ENCODE measurements at regions of chr1 and their contacts with region 1.

Region 1: DNA sequence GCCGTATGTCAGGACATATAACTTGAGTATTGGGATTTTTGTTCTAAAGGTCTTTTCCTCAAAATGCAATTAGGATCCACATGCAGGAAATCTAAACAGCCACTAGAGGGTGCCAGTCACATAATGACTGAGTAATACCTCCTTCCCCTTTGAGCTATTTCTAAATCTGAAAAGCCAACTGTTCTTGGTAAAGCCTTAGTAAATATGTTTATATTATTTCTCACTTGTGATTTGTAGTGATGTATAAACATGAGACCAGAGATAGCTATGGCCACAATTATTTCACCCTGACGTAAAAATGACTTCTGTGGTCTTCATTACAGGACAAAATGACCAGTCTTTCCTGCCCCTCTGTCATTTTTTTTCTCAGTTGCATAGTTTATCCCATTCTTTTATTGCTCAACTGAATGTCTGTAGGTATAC is 41.0 kb upstream of the DR1 start:
- DNase-seq: peak; percentile 48
- H3K4me3 ChIP-seq: no peak overlapping the region
- H3K27ac ChIP-seq: no peak overlapping the region
- H3K27me3 ChIP-seq: no peaks in the 10 kb centered on the region
- CTCF ChIP-seq: peak; percentile 90

Region 2: DNA sequence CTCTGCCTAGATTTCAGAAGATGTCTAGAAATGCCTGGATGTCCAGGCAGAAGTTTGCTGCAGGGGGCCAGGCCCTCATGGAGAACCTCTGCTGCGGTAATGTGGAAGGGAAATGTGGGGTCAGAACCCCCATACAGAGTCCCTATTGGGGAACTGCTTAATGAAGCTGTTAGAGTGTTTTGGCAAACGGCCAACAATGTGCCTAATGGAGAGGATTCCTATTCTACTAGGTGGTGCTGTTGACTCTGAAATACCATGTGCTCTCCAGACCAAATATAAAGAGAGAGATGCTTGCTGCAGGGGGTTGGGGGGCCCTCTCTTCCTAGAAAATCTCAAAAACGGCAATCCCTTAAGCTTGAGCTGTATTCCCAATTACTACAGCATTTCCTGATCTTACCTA is 16.2 kb before region 1 on chr1:
- CTCF ChIA-PET with region 1: interaction called, 13 read pairs
- POLR2A ChIA-PET with region 1: no interaction called
- DNase-seq: no peak
- H3K4me3 ChIP-seq: no peak overlapping the region
- H3K27ac ChIP-seq: no peak overlapping the region
- H3K27me3 ChIP-seq: no peaks in the 10 kb centered on the region
- CTCF ChIP-seq: no peak

Region 3: GRCh38 chr1:93338421-93338820 is 33.7 kb after region 1 on chr1:
- CTCF ChIA-PET with region 1: interaction called, 48 read pairs
- POLR2A ChIA-PET with region 1: no interaction called
- DNase-seq: peak; percentile 77
- H3K4me3 ChIP-seq: no peak overlapping the region
- H3K27ac ChIP-seq: peak overlapping the region; percentile 63
- H3K27me3 ChIP-seq: no peaks in the 10 kb centered on the region
- CTCF ChIP-seq: no peak

Region 4: DNA sequence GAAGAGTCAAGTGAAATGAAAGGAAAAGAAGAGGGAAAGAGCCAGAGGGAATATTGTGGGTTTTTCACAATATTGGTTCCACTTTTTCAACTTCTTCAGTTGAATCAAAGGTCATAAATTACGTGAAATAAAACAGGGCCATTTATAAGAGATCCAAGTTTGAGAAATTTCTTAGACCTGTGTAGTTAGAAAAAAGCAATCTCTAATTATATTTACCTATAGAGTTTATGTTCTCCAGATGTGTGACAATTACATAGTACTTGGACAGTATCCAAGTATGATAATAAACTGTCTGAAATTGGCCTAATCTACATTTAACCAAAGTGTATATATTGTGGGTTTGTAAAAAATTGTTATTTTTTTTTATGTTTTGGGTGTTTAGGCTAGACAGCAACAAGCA is 55.4 kb after region 1 on chr1:
- CTCF ChIA-PET with region 1: interaction called, 10 read pairs
- POLR2A ChIA-PET with region 1: no interaction called
- DNase-seq: no peak
- H3K4me3 ChIP-seq: no peak overlapping the region
- H3K27ac ChIP-seq: no peak overlapping the region
- H3K27me3 ChIP-seq: no peaks in the 10 kb centered on the region
- CTCF ChIP-seq: no peak

Region 5: DNA sequence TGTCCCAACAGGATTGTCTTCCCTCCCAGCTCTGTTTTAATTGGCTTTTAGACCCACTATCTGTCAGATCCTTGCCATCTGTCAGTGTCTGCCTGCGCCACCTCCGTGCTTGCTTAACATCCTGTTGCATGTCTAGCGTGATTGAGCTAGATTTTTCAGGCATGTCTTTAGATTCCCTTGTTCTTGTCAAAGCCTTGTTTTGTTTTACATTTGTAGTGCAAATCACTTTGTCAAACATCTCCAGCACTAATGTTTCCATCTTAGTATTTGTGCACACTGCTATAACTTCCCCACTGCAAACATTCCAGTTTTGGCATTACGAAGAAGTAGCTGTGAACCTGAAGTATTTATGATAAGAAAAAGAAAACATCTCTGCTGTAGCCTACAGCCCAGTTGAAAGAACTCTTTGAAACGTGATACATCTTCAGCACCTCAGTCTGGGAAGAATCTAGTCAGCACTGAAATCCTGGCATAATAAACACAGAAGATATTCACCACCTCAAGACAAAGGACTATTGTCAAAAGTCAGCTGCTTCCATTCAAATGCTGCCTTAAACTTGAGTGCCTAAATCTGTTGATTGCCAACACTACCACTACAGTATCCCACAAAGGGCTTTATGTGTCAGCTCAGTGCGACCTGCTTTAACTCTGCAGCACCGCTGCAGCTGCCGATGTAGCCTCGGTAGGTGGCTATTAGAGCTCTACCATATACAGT is 248.2 kb after region 1 on chr1:
- CTCF ChIA-PET with region 1: interaction called, 10 read pairs
- POLR2A ChIA-PET with region 1: interaction called, 3 read pairs
- DNase-seq: no peak
- H3K4me3 ChIP-seq: no peak overlapping the region
- H3K27ac ChIP-seq: no peak overlapping the region
- H3K27me3 ChIP-seq: no peaks in the 10 kb centered on the region
- CTCF ChIP-seq: no peak

Region 6: GRCh38 chr1:93846211-93846991 is 541.7 kb after region 1 on chr1:
- CTCF ChIA-PET with region 1: interaction called, 19 read pairs
- POLR2A ChIA-PET with region 1: no interaction called
- DNase-seq: peak; percentile 49
- H3K4me3 ChIP-seq: peak overlapping the region; percentile 83
- H3K27ac ChIP-seq: peak overlapping the region; percentile 98
- H3K27me3 ChIP-seq: no peaks in the 10 kb centered on the region
- CTCF ChIP-seq: peak; percentile 45